ENCODE measurements at regions of chr2 and their contacts with region 1.

Region 1: GRCh38 chr2:181058378-181059269 is 78.2 kb downstream of the UBE2E3 start:
- DNase-seq: peak; percentile 24
- H3K4me3 Mint-ChIP-seq: no peak overlapping the region
- H3K27ac Mint-ChIP-seq: no peak overlapping the region
- H3K4me1 Mint-ChIP-seq: peaks cover 6% of the 10 kb centered on the region
- H3K27me3 Mint-ChIP-seq: no peaks in the 10 kb centered on the region

Region 2: DNA sequence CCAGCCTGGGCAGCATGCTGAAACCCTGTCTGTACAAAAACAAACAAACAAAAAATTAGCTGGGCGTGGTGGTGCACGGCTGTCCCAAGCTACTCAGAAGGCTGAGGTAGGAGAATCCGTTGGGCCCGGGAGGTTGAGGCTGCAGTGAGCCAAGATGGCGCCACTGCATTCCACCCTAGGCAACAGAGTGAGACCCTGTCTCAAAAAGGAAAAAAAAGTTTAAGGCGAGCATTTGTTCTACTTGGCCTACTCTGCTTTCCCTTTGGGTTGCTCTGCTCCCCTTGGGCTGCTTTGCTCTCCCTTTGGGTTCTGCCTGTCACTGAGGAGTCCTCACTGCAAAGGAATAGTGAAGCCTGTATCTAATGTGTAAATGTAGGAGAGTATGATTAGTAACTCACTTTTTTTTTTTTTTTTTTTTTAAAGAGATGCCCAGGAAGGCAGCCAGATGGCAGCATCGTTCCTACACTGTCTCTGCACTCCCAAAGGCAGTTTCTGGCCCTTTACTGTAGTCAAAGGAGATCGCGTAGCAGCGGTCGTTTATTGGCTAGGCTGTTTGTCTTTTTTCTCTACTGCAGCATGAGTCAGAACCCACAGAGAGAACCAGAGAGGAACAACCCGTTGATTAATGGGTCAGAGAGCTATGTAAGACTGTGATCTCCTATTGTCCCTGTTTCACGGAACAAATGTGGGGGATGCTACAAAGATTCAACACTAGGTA is 933.2 kb before region 1 on chr2:
- CTCF ChIA-PET with region 1: interaction called, 61 read pairs
- POLR2A ChIA-PET with region 1: no interaction called
- intact Hi-C with region 1: loop called (anchors 1 kb)
- DNase-seq: peak; percentile 59
- H3K4me3 Mint-ChIP-seq: no peak overlapping the region
- H3K27ac Mint-ChIP-seq: no peak overlapping the region
- H3K4me1 Mint-ChIP-seq: no peaks in the 10 kb centered on the region
- H3K27me3 Mint-ChIP-seq: no peaks in the 10 kb centered on the region

Region 3: GRCh38 chr2:180669016-180669415 is 389.6 kb before region 1 on chr2:
- CTCF ChIA-PET with region 1: no interaction called
- POLR2A ChIA-PET with region 1: no interaction called
- intact Hi-C with region 1: no loop called
- DNase-seq: no peak
- H3K4me3 Mint-ChIP-seq: no peak overlapping the region
- H3K27ac Mint-ChIP-seq: no peak overlapping the region
- H3K4me1 Mint-ChIP-seq: no peaks in the 10 kb centered on the region
- H3K27me3 Mint-ChIP-seq: peaks cover 5% of the 10 kb centered on the region

Region 4: DNA sequence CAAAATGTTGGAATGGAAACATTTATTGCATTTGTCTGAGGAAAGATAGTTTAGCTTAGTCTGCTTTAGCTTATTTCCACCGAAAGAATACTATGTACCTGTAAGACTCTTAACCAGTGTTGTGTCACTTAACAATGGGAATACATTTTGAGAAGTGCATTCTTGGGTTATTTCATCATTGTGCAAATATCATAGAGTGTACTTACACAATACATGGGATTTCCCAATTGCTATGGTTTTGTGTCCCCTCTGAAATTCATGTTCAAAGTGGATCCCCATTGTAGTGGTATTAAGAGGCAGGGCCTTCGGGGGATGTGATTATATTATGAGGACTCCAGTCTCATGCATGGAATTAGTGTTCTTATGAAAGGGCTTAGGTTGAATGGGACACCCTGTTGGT is 327.6 kb before region 1 on chr2:
- CTCF ChIA-PET with region 1: interaction called, 6 read pairs
- POLR2A ChIA-PET with region 1: no interaction called
- intact Hi-C with region 1: loop called (anchors 10 kb)
- DNase-seq: no peak
- H3K4me3 Mint-ChIP-seq: no peak overlapping the region
- H3K27ac Mint-ChIP-seq: no peak overlapping the region
- H3K4me1 Mint-ChIP-seq: no peaks in the 10 kb centered on the region
- H3K27me3 Mint-ChIP-seq: no peaks in the 10 kb centered on the region